Vagina (tissue), 2 donors: ENCODE measurements at regions of chr2 and their contacts with region 1.

Region 1: DNA sequence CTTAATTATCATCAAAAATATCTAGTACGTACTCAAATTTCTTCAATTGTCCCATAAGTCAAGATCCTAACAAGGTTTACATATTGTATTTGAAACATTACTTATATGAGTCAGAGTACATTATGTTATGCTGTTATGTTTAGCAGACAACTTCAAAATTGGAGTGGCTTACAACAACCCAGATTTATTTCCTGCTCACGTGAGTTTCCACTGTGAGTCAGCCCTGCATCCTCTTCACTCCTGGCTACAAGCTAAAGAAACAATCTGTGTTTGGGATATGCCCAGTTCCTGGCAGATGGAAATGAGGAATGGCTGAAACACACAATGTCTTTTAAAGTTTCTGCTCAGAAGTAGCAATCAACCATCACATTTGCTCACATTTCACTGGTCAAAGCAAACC is 31.5 kb upstream of the TANC1 start:
- DNase-seq: no peak
- H3K4me3 ChIP-seq: no peak overlapping the region
- H3K27ac ChIP-seq: no peak overlapping the region
- H3K4me1 ChIP-seq: no peaks in the 10 kb centered on the region
- H3K27me3 ChIP-seq: no peaks in the 10 kb centered on the region
- CTCF ChIP-seq: no peak
- POLR2A ChIP-seq: no peak

Region 2: DNA sequence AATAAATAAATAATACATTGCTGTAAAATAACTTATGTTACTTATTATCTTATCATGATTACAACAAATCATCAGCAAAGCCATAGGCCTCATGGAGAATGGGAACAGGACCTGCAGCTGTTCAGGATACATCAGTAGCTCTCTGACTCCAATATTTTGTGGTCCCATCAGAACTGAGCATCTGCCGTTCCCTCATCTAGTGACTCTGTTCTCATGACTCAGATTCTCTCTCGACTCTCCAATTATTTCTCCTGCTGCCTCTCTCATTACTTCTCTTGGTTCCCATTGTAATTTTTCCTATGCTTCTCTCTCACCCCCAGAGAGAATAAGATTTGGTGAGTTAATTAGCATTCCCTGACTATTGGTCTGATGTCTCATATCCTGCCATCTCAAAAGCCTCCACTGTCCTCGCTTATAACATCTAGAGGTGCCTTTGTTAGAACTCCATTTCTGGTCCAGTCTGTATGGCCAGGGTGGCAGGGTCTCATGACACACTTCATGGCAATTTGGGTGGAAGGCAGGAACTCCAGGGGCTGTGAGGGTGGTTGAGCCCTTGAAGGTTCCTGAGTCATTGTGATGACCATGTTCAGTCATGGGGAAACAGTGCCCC is 46.6 kb before region 1 on chr2:
- intact Hi-C with region 1: loop called (anchors 1 kb)
- DNase-seq: no peak
- H3K4me3 ChIP-seq: no peak overlapping the region
- H3K27ac ChIP-seq: no peak overlapping the region
- H3K4me1 ChIP-seq: peaks cover 16% of the 10 kb centered on the region
- H3K27me3 ChIP-seq: no peaks in the 10 kb centered on the region
- CTCF ChIP-seq: no peak
- POLR2A ChIP-seq: no peak

Region 3: GRCh38 chr2:159094173-159094737 is 157.3 kb after region 1 on chr2:
- intact Hi-C with region 1: no loop called
- DNase-seq: no peak
- H3K4me3 ChIP-seq: no peak overlapping the region
- H3K27ac ChIP-seq: peak overlapping the region; percentile 89
- H3K4me1 ChIP-seq: peaks cover 83% of the 10 kb centered on the region
- H3K27me3 ChIP-seq: no peaks in the 10 kb centered on the region
- CTCF ChIP-seq: no peak
- POLR2A ChIP-seq: no peak